ENCODE measurements at regions of chr2 and their contacts with region 1.

Region 1: GRCh38 chr2:231713730-231714430 is 5.6 kb downstream of the PTMA start:
- DNase-seq: peak; percentile 93 to 97 (median 95)
- H3K4me3 ChIP-seq: peak overlapping the region in 1 of 7 experiments; percentile 45
- H3K27ac ChIP-seq: no peak overlapping the region
- H3K4me1 ChIP-seq: peaks cover 8 to 38% (median 33%) of the 10 kb centered on the region in 4 experiments
- H3K27me3 ChIP-seq: no peaks in the 10 kb centered on the region

Region 2: DNA sequence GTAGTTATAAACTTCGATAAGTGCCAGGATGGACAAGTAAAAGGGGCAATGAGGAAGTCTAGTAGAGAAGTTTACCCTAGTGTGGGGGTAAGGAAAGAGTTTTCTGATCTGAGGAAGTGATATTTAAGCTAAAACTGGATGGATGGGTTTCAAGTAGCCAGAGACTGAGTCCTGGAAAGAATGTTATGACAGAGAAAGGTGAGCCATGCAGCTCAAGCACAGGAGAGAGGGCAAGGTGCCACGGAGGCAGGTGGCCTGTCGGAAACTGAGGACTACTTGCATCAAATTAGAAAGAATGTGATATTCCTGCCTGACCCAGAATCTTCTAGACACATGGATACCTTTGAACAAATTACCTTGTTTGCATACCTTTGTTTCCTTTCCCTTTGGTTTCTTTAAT is 210.1 kb before region 1 on chr2:
- CTCF ChIA-PET with region 1: no interaction called
- POLR2A ChIA-PET with region 1: no interaction called
- DNase-seq: no peak
- H3K4me3 ChIP-seq: no peak overlapping the region
- H3K27ac ChIP-seq: no peak overlapping the region
- H3K4me1 ChIP-seq: peaks cover 0 to 4% (median 0%) of the 10 kb centered on the region in 4 experiments
- H3K27me3 ChIP-seq: no peaks in the 10 kb centered on the region

Region 3: DNA sequence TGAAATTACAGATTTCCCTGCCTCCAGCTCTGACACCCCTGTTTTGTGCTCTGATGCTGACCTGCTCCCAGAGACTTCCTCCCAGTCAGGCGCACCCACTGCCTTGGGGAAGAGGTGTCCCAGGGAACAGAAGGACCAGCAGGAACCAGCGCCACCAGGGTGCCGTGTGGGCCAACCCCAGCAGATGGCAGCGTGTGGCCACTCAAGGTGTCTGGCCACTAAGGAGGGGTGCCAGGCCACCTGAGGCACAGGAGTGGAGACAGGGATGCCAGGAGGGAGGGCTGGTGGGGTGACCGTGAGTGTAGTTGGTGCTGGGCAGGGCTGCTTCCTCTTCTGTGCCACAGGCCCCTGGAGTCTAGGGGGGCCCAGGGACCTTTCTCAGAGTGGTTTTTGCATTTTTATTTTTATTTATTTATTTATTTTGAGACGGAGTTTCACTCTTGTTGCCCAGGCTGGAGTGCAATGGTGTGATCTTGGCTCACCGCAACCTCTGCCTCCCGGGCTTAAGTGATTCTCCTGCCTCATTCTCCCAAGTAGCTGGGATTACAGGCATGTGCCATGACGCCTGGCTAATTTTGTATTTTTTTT is 65.2 kb before region 1 on chr2:
- CTCF ChIA-PET with region 1: interaction called, 31 read pairs
- POLR2A ChIA-PET with region 1: no interaction called
- DNase-seq: peak; percentile 55 to 79 (median 76)
- H3K4me3 ChIP-seq: no peak overlapping the region
- H3K27ac ChIP-seq: no peak overlapping the region
- H3K4me1 ChIP-seq: peaks cover 0 to 31% (median 12%) of the 10 kb centered on the region in 4 experiments
- H3K27me3 ChIP-seq: no peaks in the 10 kb centered on the region

Region 4: GRCh38 chr2:231687133-231687852 is 26.6 kb before region 1 on chr2:
- CTCF ChIA-PET with region 1: interaction called, 417 read pairs
- POLR2A ChIA-PET with region 1: interaction called, 6 read pairs
- DNase-seq: peak; percentile 79 to 88 (median 87)
- H3K4me3 ChIP-seq: peak overlapping the region in 6 of 7 experiments; percentile 33 to 70 (median 48)
- H3K27ac ChIP-seq: no peak overlapping the region
- H3K4me1 ChIP-seq: peaks cover 0 to 34% (median 24%) of the 10 kb centered on the region in 4 experiments
- H3K27me3 ChIP-seq: no peaks in the 10 kb centered on the region

Region 5: GRCh38 chr2:231701456-231702373 is 12.2 kb before region 1 on chr2:
- CTCF ChIA-PET with region 1: interaction called, 15 read pairs
- POLR2A ChIA-PET with region 1: interaction called, 4 read pairs
- DNase-seq: no peak
- H3K4me3 ChIP-seq: no peak overlapping the region
- H3K27ac ChIP-seq: no peak overlapping the region
- H3K4me1 ChIP-seq: peaks cover 0 to 15% (median 12%) of the 10 kb centered on the region in 4 experiments
- H3K27me3 ChIP-seq: no peaks in the 10 kb centered on the region

Region 6: GRCh38 chr2:231732604-231733003 is 18.7 kb after region 1 on chr2:
- CTCF ChIA-PET with region 1: interaction called, 10 read pairs
- POLR2A ChIA-PET with region 1: no interaction called
- DNase-seq: no peak
- H3K4me3 ChIP-seq: no peak overlapping the region
- H3K27ac ChIP-seq: no peak overlapping the region
- H3K4me1 ChIP-seq: no peaks in the 10 kb centered on the region
- H3K27me3 ChIP-seq: no peaks in the 10 kb centered on the region

Region 7: DNA sequence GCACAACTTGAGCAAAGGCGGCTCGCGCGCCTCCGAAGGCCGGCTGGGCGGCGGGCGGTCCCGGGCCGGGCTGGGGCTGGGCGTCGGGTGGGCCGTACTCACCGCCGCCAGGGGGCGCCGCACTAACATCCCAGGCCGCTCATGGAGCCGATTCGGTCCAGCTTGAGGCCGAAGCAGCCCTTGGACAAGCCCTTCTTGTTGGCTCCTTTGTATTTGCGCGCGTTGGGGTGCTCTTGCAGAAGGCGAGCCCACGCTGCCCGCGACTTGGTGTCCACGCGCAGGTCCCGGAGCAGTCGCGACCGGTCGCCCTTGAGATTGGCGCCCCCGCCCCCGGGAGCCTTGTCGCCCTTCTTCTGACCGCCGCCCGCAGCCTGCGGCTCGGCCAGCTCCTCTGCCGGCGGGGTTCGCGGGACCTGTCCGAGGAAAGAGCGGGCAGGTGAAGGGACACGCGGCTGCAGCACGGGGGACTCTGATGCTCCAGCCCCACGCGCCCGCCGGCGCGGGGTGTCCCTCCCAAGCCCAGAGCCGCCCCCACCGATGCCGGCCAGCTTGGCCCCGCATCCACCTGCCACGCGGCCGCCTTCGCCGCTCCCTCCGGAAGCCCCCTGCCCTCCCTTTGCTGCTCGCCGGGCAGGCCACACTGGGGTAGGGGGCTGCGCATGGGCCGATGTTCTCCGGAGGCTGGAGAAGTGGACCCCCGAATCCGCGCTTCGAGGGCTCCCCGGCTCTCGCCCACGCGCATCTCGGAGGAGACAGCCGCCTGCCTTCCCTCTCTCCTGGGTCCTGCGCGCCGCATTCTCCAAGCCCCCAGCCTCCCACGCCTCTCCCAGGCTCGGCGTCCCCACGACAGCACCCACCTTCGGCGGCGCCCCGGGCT is 211.7 kb after region 1 on chr2:
- CTCF ChIA-PET with region 1: no interaction called
- POLR2A ChIA-PET with region 1: no interaction called
- DNase-seq: peak; percentile 64 to 76 (median 72)
- H3K4me3 ChIP-seq: peak overlapping the region in 6 of 7 experiments; percentile 48 to 77 (median 64)
- H3K27ac ChIP-seq: no peak overlapping the region
- H3K4me1 ChIP-seq: peaks cover 0 to 32% (median 30%) of the 10 kb centered on the region in 4 experiments
- H3K27me3 ChIP-seq: peaks cover 0 to 63% (median 25%) of the 10 kb centered on the region in 5 experiments